K562 (cell line): ENCODE measurements at regions of chr2 and their contacts with region 1.

Region 1: DNA sequence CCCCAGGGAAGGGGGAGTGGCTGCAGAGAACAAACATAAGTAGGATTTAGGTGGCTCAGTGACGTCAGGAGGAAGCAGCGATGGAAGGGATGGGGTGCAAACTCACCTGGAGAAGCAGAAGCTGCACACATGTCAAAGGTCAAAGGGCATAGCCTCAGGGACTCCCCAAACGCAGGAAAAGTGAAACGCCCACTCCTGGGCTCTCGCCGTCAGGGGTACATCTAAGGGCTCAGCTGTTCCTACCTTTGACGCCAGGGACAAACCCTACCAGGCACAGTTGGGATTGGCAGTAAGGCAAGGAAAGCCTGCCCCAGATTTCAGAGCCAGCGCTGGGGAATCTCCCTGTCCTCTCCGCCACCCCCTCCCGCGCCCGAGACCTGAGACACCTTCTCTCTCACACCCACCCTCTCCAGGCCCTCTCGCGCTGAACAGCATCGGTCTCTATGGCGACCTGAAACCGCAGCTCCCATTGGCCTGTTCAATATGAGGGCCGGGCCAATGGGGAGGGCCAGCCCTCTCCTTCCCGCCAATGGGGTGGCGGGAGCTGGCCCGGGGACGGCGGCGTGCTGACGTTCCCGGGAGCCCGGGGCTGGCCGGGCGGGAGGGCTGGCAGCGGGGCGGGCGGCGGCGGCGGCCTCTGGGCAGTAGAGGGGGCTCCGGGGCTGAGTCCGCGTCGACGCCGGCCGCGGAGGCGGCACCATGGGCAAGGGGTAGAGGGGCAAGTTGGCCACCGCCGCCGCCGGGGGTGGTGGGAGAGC is at the starts of genes CCDC148 and PKP4:
- DNase-seq: peak; percentile 97 to 99 (median 99)
- ATAC-seq: peak; percentile 92
- H3K4me3 ChIP-seq: peak within 1 kb of the TSS; percentile 85
- H3K27ac ChIP-seq: peak within 1 kb of the TSS; percentile 84
- H3K4me1 ChIP-seq: peaks cover 19 to 25% of the 10 kb centered on the region in 2 experiments
- H3K27me3 ChIP-seq: no peaks in the 10 kb centered on the region
- CTCF ChIP-seq: peak; percentile 0 to 20 (median 9); a peak in 1 of 6 replicates
- EP300 ChIP-seq: no peak
- POLR2A ChIP-seq: no peak
- RAD21 ChIP-seq: no peak
- polyA plus RNA-seq, gene CCDC148: 0.77 to 1.4 TPM
- polyA plus RNA-seq, gene PKP4: 24.6 to 29.4 TPM

Region 2: GRCh38 chr2:158214438-158214837 is 242.1 kb before region 1 on chr2:
- CTCF ChIA-PET with region 1: no interaction called
- POLR2A ChIA-PET with region 1: no interaction called
- in situ Hi-C with region 1: no loop called
- intact Hi-C with region 1: loop called (anchors 10 kb)
- DNase-seq: peak; percentile 18 to 85 (median 29)
- ATAC-seq: peak; percentile 95
- H3K4me3 ChIP-seq: no peak overlapping the region
- H3K27ac ChIP-seq: peak overlapping the region; percentile 62
- H3K4me1 ChIP-seq: peaks cover 0 to 15% of the 10 kb centered on the region in 2 experiments; a peak in 3 of 5 replicates
- H3K27me3 ChIP-seq: no peaks in the 10 kb centered on the region
- CTCF ChIP-seq: no peak
- EP300 ChIP-seq: peak; percentile 61; the same call in 1 of the 2 replicates
- POLR2A ChIP-seq: no peak
- RAD21 ChIP-seq: no peak; a peak in 1 of 4 replicates

Region 3: DNA sequence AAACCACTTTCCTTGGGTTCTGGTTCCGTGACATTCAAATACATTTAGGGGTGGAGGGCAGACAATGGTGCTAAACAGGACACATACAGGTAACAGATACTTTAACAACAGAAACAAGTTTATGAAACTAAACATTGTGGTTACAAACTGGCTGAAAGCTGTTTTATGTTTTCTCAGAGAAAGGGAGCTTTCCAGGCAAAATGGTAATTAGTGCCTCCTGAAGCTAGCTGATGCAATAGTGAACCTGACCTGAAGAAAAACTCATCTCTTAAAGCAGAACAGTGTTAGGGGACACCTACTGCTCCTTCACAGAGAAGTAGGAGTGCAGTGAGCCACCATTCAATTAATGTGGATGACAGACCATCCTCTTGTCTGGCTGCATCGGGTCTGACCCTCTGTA is 138.8 kb before region 1 on chr2:
- CTCF ChIA-PET with region 1: no interaction called
- POLR2A ChIA-PET with region 1: no interaction called
- in situ Hi-C with region 1: no loop called
- intact Hi-C with region 1: loop called (anchors 5 kb)
- DNase-seq: peak in 1 of 4 experiments; percentile 39
- ATAC-seq: peak; percentile 77
- H3K4me3 ChIP-seq: no peak overlapping the region
- H3K27ac ChIP-seq: peak overlapping the region; percentile 46; the same call in 2 of the 3 replicates
- H3K4me1 ChIP-seq: peaks cover 4 to 26% of the 10 kb centered on the region in 2 experiments; a peak in 4 of 5 replicates
- H3K27me3 ChIP-seq: no peaks in the 10 kb centered on the region
- CTCF ChIP-seq: no peak
- EP300 ChIP-seq: peak; percentile 61
- POLR2A ChIP-seq: no peak
- RAD21 ChIP-seq: peak in 1 of 2 experiments; percentile 39; a peak in 2 of 4 replicates

Region 4: DNA sequence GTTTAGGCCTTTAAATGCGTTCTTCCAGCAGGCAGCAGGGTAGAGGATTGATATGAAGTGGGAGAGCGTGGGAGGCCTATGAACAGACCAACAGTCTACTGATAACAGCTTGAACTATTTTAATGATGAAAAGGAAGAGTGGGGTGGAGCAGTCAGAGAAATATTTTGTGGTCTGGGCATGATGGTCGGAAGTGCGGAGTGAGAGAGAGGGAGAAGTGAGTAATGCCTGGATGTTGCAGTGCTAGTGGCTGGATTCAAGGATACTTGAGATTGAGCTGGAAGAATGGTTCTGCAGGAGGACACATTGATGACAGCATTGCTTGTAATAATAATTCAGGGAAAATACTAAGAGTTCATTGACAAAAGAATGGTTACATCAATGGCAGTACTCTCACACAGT is 187.7 kb after region 1 on chr2:
- CTCF ChIA-PET with region 1: no interaction called
- POLR2A ChIA-PET with region 1: no interaction called
- in situ Hi-C with region 1: no loop called
- intact Hi-C with region 1: loop called (anchors 5 kb)
- DNase-seq: no peak
- ATAC-seq: no peak
- H3K4me3 ChIP-seq: no peak overlapping the region
- H3K27ac ChIP-seq: no peak overlapping the region
- H3K4me1 ChIP-seq: no peaks in the 10 kb centered on the region
- H3K27me3 ChIP-seq: no peaks in the 10 kb centered on the region
- CTCF ChIP-seq: no peak
- EP300 ChIP-seq: no peak
- POLR2A ChIP-seq: no peak
- RAD21 ChIP-seq: no peak